Activated CD8-positive, alpha-beta T cell treated with anti-CD3 and anti-CD28 coated beads for 36 hours (primary cell): ENCODE measurements at regions of chr11 and their contacts with region 1.

Region 1: DNA sequence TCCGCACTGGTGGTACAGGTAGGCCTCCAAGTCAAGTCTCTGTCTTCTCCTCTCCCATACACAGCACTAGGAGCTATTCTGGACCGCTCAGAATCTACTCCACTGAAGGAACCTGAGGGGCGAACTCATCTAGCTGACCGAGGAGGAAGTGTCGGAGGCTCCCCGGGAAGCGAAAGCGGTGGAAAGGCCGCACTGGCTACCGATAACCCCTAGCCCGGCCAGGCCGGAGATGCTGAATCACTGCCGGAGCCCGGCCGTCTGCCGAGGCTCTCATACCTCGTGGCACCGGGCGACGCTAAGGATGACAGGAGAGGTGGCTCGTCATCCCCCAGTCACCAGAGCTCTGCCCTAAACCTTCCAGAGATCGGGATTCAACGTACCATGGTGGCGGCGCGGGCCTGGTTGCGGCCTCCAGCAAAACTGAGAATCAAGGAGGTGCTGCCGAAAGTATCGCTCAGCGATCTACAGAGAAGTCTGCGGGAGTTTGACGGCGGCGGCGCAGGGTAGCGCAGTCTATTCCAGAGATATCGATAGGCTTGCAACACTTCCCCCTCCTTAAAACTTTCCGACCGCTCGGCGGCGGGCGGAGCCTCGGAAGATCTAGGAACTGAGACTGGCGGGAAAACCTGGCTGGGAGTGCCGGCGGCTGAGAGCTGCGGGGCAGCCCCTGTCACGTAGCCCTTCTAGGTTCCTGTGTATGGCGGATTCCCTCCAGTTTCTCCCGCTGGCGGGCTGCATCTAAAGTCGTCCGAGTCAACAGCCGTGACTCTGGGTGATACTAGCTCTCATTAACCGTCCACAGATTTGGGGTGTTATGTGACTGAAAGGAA is at the start of gene PSMA1:
- DNase-seq: peak; percentile 99
- ATAC-seq: peak; percentile 89
- H3K4me3 Mint-ChIP-seq: peak within 1 kb of the TSS; percentile 93
- H3K27ac Mint-ChIP-seq: peak within 1 kb of the TSS; percentile 97
- H3K4me1 Mint-ChIP-seq: peaks cover 26% of the 10 kb centered on the region
- H3K27me3 Mint-ChIP-seq: no peaks in the 10 kb centered on the region
- CTCF ChIP-seq: no peak
- total RNA-seq, gene PSMA1: 329 to 338 TPM

Region 2: GRCh38 chr11:14499554-14500180 is 20.5 kb before region 1 on chr11 and contains the start of gene COPB1:
- CTCF ChIA-PET with region 1: interaction called, 4 read pairs
- POLR2A ChIA-PET with region 1: interaction called, 40 read pairs
- intact Hi-C with region 1: loop called (anchors 2 kb)
- DNase-seq: peak; percentile 96
- ATAC-seq: peak; percentile 94
- H3K4me3 Mint-ChIP-seq: peak within 1 kb of the TSS; percentile 96
- H3K27ac Mint-ChIP-seq: peak within 1 kb of the TSS; percentile 99
- H3K4me1 Mint-ChIP-seq: peaks cover 34% of the 10 kb centered on the region
- H3K27me3 Mint-ChIP-seq: no peaks in the 10 kb centered on the region
- CTCF ChIP-seq: no peak
- total RNA-seq, gene COPB1: 90.9 to 93.5 TPM

Region 3: GRCh38 chr11:14537134-14537599 is 17.0 kb after region 1 on chr11:
- CTCF ChIA-PET with region 1: interaction called, 4 read pairs
- POLR2A ChIA-PET with region 1: interaction called, 15 read pairs
- intact Hi-C with region 1: no loop called
- DNase-seq: peak; percentile 70
- ATAC-seq: peak; percentile 83
- H3K4me3 Mint-ChIP-seq: peak overlapping the region; percentile 64
- H3K27ac Mint-ChIP-seq: peak overlapping the region; percentile 92
- H3K4me1 Mint-ChIP-seq: peaks cover 44% of the 10 kb centered on the region
- H3K27me3 Mint-ChIP-seq: no peaks in the 10 kb centered on the region
- CTCF ChIP-seq: peak; percentile 90

Region 4: DNA sequence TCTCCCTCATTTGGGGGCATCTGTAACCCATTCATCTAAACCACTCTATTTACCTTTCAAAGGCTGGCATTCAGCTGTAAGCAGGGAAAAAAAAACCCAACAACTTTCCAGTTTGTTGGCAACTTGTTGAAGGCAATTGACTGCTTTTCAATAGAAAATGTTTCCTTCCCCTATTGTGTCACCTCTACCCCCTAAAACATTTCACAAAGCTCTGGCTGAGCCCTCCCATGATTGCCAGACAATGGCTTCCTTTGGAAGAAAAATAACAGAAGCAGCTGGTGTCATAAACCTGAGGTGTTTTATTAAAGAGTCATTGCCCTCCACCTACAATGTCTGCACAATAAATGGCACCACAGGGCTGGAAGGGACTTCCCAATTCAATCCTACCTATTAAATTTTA is 22.2 kb after region 1 on chr11:
- CTCF ChIA-PET with region 1: interaction called, 3 read pairs
- POLR2A ChIA-PET with region 1: interaction called, 12 read pairs
- intact Hi-C with region 1: no loop called
- DNase-seq: no peak
- ATAC-seq: no peak
- H3K4me3 Mint-ChIP-seq: no peak overlapping the region
- H3K27ac Mint-ChIP-seq: no peak overlapping the region
- H3K4me1 Mint-ChIP-seq: peaks cover 67% of the 10 kb centered on the region
- H3K27me3 Mint-ChIP-seq: no peaks in the 10 kb centered on the region
- CTCF ChIP-seq: no peak

Region 5: DNA sequence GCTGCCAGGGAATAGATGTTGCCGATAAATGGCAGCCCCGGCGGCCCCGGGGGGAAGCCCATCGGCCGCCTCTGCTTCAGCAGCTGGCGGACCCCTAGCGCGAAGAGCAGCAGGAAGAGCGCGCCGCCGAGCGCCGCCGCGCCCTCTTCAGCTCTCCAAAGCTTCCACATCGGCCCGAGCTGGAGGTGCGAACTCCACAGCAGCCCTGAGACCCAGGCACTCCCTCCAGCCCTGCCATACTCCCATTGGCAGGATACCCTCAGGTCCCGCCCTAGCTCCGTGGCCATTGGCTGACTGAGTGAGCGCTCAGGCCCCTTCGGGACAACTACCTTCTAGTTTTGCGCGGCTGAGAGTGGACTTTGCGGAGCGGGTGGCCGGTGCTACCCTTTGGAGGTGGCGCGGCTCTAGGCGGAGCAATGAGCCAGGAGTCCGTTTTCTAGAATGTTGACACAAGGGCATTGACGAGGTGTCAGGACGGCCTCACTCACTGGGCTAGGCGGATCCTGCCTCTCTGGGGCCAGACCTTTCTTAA is 372.0 kb after region 1 on chr11 and contains the start of gene CYP2R1:
- CTCF ChIA-PET with region 1: no interaction called
- POLR2A ChIA-PET with region 1: interaction called, 12 read pairs
- intact Hi-C with region 1: loop called (anchors 5 kb)
- DNase-seq: peak; percentile 94
- ATAC-seq: peak; percentile 84
- H3K4me3 Mint-ChIP-seq: peak within 1 kb of the TSS; percentile 91
- H3K27ac Mint-ChIP-seq: peak within 1 kb of the TSS; percentile 100
- H3K4me1 Mint-ChIP-seq: peaks cover 54% of the 10 kb centered on the region
- H3K27me3 Mint-ChIP-seq: no peaks in the 10 kb centered on the region
- CTCF ChIP-seq: no peak
- total RNA-seq, gene CYP2R1: 12.9 to 13.9 TPM